ENCODE measurements at regions of chr4 and their contacts with region 1.

Region 1: GRCh38 chr4:94621491-94622080 is 136.2 kb upstream of the BMPR1B start:
- DNase-seq: peak; percentile 32
- ATAC-seq: no peak
- H3K4me3 ChIP-seq: no peak overlapping the region
- H3K4me3 Mint-ChIP-seq: no peak overlapping the region
- H3K27ac ChIP-seq: no peak overlapping the region
- H3K27ac Mint-ChIP-seq: no peak overlapping the region
- H3K4me1 ChIP-seq: no peaks in the 10 kb centered on the region
- H3K4me1 Mint-ChIP-seq: no peaks in the 10 kb centered on the region
- H3K27me3 ChIP-seq: no peaks in the 10 kb centered on the region
- H3K27me3 Mint-ChIP-seq: no peaks in the 10 kb centered on the region
- CTCF ChIP-seq: peak; percentile 94

Region 2: GRCh38 chr4:93168053-93168452 is 1453.5 kb before region 1 on chr4:
- CTCF ChIA-PET with region 1: no interaction called
- POLR2A ChIA-PET with region 1: no interaction called
- intact Hi-C with region 1: no loop called
- DNase-seq: no peak
- ATAC-seq: no peak
- H3K4me3 ChIP-seq: no peak overlapping the region
- H3K4me3 Mint-ChIP-seq: no peak overlapping the region
- H3K27ac ChIP-seq: no peak overlapping the region
- H3K27ac Mint-ChIP-seq: no peak overlapping the region
- H3K4me1 ChIP-seq: no peaks in the 10 kb centered on the region
- H3K4me1 Mint-ChIP-seq: no peaks in the 10 kb centered on the region
- H3K27me3 ChIP-seq: no peaks in the 10 kb centered on the region
- H3K27me3 Mint-ChIP-seq: no peaks in the 10 kb centered on the region
- CTCF ChIP-seq: no peak

Region 3: DNA sequence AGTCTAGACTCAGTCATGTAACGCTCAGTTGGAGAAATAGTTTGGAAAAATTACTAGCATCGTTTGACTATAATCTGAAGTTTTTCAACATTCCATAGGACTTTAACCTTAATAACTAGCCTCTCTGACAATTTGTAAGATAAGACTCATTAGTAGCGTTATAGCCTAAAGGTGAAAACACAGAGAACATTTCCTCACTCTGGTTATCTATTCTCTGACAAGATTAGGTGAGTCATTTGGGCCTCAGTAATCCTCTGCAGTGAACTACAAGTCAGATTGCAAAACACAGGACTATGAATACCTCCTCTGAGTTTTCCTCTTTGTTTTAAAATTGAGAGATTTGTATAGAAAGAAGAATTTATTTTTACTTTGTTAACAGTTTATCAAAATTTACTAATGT is 201.6 kb before region 1 on chr4:
- CTCF ChIA-PET with region 1: no interaction called
- POLR2A ChIA-PET with region 1: no interaction called
- intact Hi-C with region 1: no loop called
- DNase-seq: no peak
- ATAC-seq: no peak
- H3K4me3 ChIP-seq: no peak overlapping the region
- H3K4me3 Mint-ChIP-seq: no peak overlapping the region
- H3K27ac ChIP-seq: no peak overlapping the region
- H3K27ac Mint-ChIP-seq: no peak overlapping the region
- H3K4me1 ChIP-seq: no peaks in the 10 kb centered on the region
- H3K4me1 Mint-ChIP-seq: no peaks in the 10 kb centered on the region
- H3K27me3 ChIP-seq: peaks cover 0 to 6% (median 3%) of the 10 kb centered on the region in 4 experiments
- H3K27me3 Mint-ChIP-seq: peaks cover 50% of the 10 kb centered on the region
- CTCF ChIP-seq: no peak

Region 4: GRCh38 chr4:94588896-94589693 is 32.5 kb before region 1 on chr4:
- CTCF ChIA-PET with region 1: no interaction called
- POLR2A ChIA-PET with region 1: no interaction called
- intact Hi-C with region 1: no loop called
- DNase-seq: no peak
- ATAC-seq: no peak
- H3K4me3 ChIP-seq: no peak overlapping the region
- H3K4me3 Mint-ChIP-seq: no peak overlapping the region
- H3K27ac ChIP-seq: no peak overlapping the region
- H3K27ac Mint-ChIP-seq: no peak overlapping the region
- H3K4me1 ChIP-seq: no peaks in the 10 kb centered on the region
- H3K4me1 Mint-ChIP-seq: no peaks in the 10 kb centered on the region
- H3K27me3 ChIP-seq: no peaks in the 10 kb centered on the region
- H3K27me3 Mint-ChIP-seq: no peaks in the 10 kb centered on the region
- CTCF ChIP-seq: no peak

Region 5: DNA sequence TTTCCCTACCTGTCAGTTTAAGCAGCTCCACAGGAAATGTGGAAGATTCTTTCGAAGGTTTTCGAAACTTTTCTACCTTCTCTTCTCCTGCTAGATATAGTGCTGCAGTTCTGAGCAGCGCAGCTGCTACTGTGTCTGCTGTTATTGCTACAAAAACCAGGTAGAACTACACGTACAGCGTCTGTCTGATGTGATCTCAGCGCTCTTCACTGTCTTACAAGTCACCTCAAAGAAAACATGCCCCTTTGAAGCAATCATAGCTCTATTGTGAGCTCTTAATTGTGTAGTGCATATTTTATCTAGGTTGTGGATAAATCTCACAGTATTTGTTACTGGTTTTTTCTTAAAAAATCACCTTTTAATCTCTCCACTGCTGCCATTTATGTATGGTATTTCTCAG is 11.4 kb before region 1 on chr4:
- CTCF ChIA-PET with region 1: interaction called, 18 read pairs
- POLR2A ChIA-PET with region 1: no interaction called
- intact Hi-C with region 1: no loop called
- DNase-seq: no peak
- ATAC-seq: no peak
- H3K4me3 ChIP-seq: no peak overlapping the region
- H3K4me3 Mint-ChIP-seq: no peak overlapping the region
- H3K27ac ChIP-seq: no peak overlapping the region
- H3K27ac Mint-ChIP-seq: no peak overlapping the region
- H3K4me1 ChIP-seq: no peaks in the 10 kb centered on the region
- H3K4me1 Mint-ChIP-seq: no peaks in the 10 kb centered on the region
- H3K27me3 ChIP-seq: no peaks in the 10 kb centered on the region
- H3K27me3 Mint-ChIP-seq: no peaks in the 10 kb centered on the region
- CTCF ChIP-seq: no peak

Region 6: GRCh38 chr4:94665500-94666404 is 44.2 kb after region 1 on chr4:
- CTCF ChIA-PET with region 1: no interaction called
- POLR2A ChIA-PET with region 1: no interaction called
- intact Hi-C with region 1: no loop called
- DNase-seq: no peak
- ATAC-seq: no peak
- H3K4me3 ChIP-seq: no peak overlapping the region
- H3K4me3 Mint-ChIP-seq: no peak overlapping the region
- H3K27ac ChIP-seq: no peak overlapping the region
- H3K27ac Mint-ChIP-seq: no peak overlapping the region
- H3K4me1 ChIP-seq: no peaks in the 10 kb centered on the region
- H3K4me1 Mint-ChIP-seq: no peaks in the 10 kb centered on the region
- H3K27me3 ChIP-seq: no peaks in the 10 kb centered on the region
- H3K27me3 Mint-ChIP-seq: no peaks in the 10 kb centered on the region
- CTCF ChIP-seq: no peak